ENCODE measurements at regions of chrX and their contacts with region 1.

Region 1: GRCh38 chrX:110450050-110450449 is 91.4 kb downstream of the RTL9 start:
- DNase-seq: peak; percentile 14
- ATAC-seq: no peak
- H3K4me3 Mint-ChIP-seq: no peak overlapping the region
- H3K27ac Mint-ChIP-seq: no peak overlapping the region
- H3K4me1 Mint-ChIP-seq: no peaks in the 10 kb centered on the region
- H3K27me3 Mint-ChIP-seq: no peaks in the 10 kb centered on the region
- CTCF ChIP-seq: no peak

Region 2: DNA sequence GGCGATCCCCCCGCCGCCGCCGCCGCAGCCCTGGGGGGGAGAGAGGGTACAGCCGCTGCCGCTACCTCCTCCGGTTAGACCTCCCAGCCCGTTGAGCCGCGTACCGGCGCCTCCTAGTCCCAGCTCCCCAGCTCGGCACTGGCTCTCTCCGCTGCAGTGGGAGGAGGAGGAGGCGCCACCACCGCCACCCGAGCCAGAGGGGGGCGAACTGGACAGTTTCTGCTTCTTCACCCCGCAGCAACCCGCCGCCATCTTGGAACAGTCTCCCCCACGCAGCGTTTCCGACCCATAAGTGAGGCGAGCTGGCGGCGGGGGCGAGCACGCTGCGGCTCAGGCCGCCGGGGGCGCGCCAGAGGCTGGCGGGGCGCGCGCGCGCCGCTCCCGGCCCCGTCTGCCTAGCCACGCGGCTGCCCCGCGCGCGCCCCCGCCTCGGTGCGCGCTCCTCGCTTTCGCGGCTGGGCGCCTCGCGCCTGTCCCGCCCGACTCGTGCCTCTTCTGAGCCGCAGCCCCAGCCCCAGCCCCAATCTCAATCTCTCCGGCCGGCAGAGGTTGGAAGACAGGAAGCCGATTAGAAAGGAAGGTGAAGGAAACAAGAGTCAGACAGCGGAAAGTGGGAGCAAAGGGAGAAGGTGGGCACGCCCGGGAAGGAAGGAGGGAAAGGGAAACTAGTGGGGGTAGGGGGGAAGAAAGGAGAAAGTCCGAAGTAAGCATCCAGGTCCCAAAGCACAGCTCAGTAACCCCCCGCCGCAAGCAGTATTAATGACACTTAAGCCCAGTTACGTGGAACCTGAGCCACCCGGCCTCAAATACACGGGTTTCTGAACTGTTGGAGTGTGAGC is 132.0 kb before region 1 on chrX and contains the start of gene AMMECR1:
- CTCF ChIA-PET with region 1: no interaction called
- POLR2A ChIA-PET with region 1: no interaction called
- intact Hi-C with region 1: no loop called
- DNase-seq: peak; percentile 74
- ATAC-seq: peak; percentile 85
- H3K4me3 Mint-ChIP-seq: peak within 1 kb of the TSS; percentile 94
- H3K27ac Mint-ChIP-seq: peak within 1 kb of the TSS; percentile 97
- H3K4me1 Mint-ChIP-seq: peaks cover 31% of the 10 kb centered on the region
- H3K27me3 Mint-ChIP-seq: no peaks in the 10 kb centered on the region
- CTCF ChIP-seq: no peak
- total RNA-seq, gene AMMECR1: 9.0 and 10.8 TPM in 2 replicates

Region 3: GRCh38 chrX:110847334-110847733 is 397.3 kb after region 1 on chrX:
- CTCF ChIA-PET with region 1: interaction called, 7 read pairs
- POLR2A ChIA-PET with region 1: no interaction called
- intact Hi-C with region 1: loop called (anchors 1 kb)
- DNase-seq: no peak
- ATAC-seq: no peak
- H3K4me3 Mint-ChIP-seq: no peak overlapping the region
- H3K27ac Mint-ChIP-seq: no peak overlapping the region
- H3K4me1 Mint-ChIP-seq: no peaks in the 10 kb centered on the region
- H3K27me3 Mint-ChIP-seq: peaks cover 2% of the 10 kb centered on the region
- CTCF ChIP-seq: no peak

Measured in activated B cell treated with CpG ODN at 0.5 μM for 24 hours (primary cell).